PC-9 (cell line): ENCODE measurements at regions of chr5 and their contacts with region 1.

Region 1: DNA sequence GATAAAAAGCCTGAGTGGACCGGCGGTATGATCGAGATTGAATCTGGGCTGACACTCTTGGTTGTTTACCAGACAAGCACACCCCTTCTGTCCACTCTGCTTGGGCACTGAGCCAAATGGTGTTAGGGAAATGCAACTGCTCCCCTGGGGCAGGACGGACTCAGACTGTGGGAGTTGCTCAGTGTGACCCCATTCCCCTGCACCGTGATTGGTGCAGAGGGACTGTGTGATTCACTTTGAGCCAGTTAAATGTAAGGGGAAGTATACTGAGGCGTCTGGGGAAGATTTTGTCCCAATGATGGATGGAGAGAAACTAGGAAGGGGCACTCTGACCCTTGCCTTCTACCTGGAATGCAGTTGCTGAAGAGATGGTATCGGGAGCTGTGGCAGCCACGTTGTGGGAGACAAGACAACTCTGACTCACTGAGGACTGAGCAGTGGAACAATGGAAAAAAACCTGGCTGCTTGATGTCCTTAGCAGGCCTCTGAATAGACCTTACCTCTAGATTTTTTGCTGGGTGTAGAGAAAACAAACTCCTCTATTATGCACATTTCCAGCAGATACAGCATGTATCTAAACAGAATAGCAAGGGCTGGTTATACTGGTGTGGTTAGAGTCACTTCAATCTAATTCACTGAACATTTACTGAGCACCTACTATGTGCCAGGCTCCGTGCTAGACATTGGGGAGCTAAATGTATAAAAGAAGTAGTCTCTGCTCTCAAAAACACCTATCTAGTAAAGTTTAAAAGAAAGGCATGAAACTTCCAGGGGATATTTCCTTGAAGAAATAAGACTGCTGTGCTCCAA is 196.2 kb upstream of the ANKRD55 start:
- DNase-seq: peak; percentile 62 to 72
- H3K4me3 ChIP-seq: no peak overlapping the region
- H3K27ac ChIP-seq: no peak overlapping the region
- H3K4me1 ChIP-seq: 0 out of 2 replicates have a peak, but pooled peaks cover 6% of the 10 kb centered on the region
- H3K27me3 ChIP-seq: no peaks in the 10 kb centered on the region
- CTCF ChIP-seq: no peak

Region 2: GRCh38 chr5:56480078-56480704 is 50.9 kb after region 1 on chr5:
- CTCF ChIA-PET with region 1: no interaction called
- POLR2A ChIA-PET with region 1: no interaction called
- intact Hi-C with region 1: no loop called
- DNase-seq: peak in 1 of 2 experiments; percentile 8
- H3K4me3 ChIP-seq: peak overlapping the region; percentile 78
- H3K27ac ChIP-seq: peak overlapping the region; percentile 85
- H3K4me1 ChIP-seq: peaks cover 53% of the 10 kb centered on the region
- H3K27me3 ChIP-seq: no peaks in the 10 kb centered on the region
- CTCF ChIP-seq: no peak

Region 3: DNA sequence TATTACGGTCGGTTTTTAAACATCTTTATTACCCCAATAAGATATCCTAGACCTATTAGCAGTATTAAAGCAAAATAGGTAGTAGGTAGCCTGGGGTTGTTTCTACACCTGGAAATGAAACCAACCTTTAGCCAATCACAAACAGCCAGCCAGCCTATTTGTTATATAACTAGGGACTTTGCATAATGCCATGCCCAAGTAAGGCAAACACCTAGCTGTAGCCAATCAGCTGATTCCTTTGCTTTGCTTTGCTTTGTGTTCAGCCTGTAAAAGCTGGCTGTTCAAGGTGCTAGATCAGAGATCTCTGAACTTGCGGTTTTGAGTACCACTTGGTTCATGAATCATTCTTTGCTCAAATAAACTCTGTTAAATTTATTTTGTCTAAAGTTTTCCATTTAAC is 433.6 kb after region 1 on chr5:
- CTCF ChIA-PET with region 1: no interaction called
- POLR2A ChIA-PET with region 1: interaction called, 10 read pairs
- intact Hi-C with region 1: no loop called
- DNase-seq: no peak
- H3K4me3 ChIP-seq: no peak overlapping the region
- H3K27ac ChIP-seq: no peak overlapping the region
- H3K4me1 ChIP-seq: no peaks in the 10 kb centered on the region
- H3K27me3 ChIP-seq: no peaks in the 10 kb centered on the region
- CTCF ChIP-seq: no peak